Ascending aorta (tissue), 2 donors: ENCODE measurements at regions of chr4 and their contacts with region 1.

Region 1: GRCh38 chr4:109815151-109816081 is at the start of gene GAR1:
- DNase-seq: peak; percentile 57 to 93
- H3K4me3 ChIP-seq: peak within 1 kb of the TSS; percentile 68 to 80
- H3K27ac ChIP-seq: peak within 1 kb of the TSS; percentile 66 to 87
- H3K4me1 ChIP-seq: peaks cover 6% of the 10 kb centered on the region in 2 donors
- H3K27me3 ChIP-seq: no peaks in the 10 kb centered on the region
- CTCF ChIP-seq: no peak
- total RNA-seq, gene GAR1: not detected

Region 2: GRCh38 chr4:108620101-108620932 is 1195.1 kb before region 1 on chr4 and contains the start of gene RPL34:
- intact Hi-C with region 1: loop called (anchors 5 kb)
- DNase-seq: peak; percentile 89 to 99
- H3K4me3 ChIP-seq: peak within 1 kb of the TSS; percentile 66 to 83
- H3K27ac ChIP-seq: peak within 1 kb of the TSS; percentile 82 to 85
- H3K4me1 ChIP-seq: peaks cover 3 to 11% of the 10 kb centered on the region in 2 donors
- H3K27me3 ChIP-seq: no peaks in the 10 kb centered on the region
- CTCF ChIP-seq: no peak
- total RNA-seq, gene RPL34: 571 TPM

Region 3: GRCh38 chr4:109433205-109434006 is 382.0 kb before region 1 on chr4 and contains the start of gene SEC24B:
- intact Hi-C with region 1: loop called (anchors 2 kb)
- DNase-seq: peak; percentile 64 to 93
- H3K4me3 ChIP-seq: peak within 1 kb of the TSS; percentile 86 to 95
- H3K27ac ChIP-seq: peak within 1 kb of the TSS; percentile 92 to 96
- H3K4me1 ChIP-seq: peaks cover 3 to 37% of the 10 kb centered on the region in 2 donors
- H3K27me3 ChIP-seq: no peaks in the 10 kb centered on the region
- CTCF ChIP-seq: peak; percentile 34 to 90 (median 58)
- total RNA-seq, gene SEC24B: 20.1 TPM

Region 4: GRCh38 chr4:109690690-109691410 is 124.6 kb before region 1 on chr4:
- intact Hi-C with region 1: no loop called
- DNase-seq: no peak
- H3K4me3 ChIP-seq: no peak overlapping the region
- H3K27ac ChIP-seq: no peak overlapping the region
- H3K4me1 ChIP-seq: no peaks in the 10 kb centered on the region
- H3K27me3 ChIP-seq: no peaks in the 10 kb centered on the region
- CTCF ChIP-seq: no peak

Region 5: GRCh38 chr4:109702950-109703663 is 112.3 kb before region 1 on chr4 and contains the start of gene CASP6:
- intact Hi-C with region 1: loop called (anchors 2 kb)
- DNase-seq: peak; percentile 52 to 92
- H3K4me3 ChIP-seq: peak within 1 kb of the TSS; percentile 58 to 77
- H3K27ac ChIP-seq: peak within 1 kb of the TSS; percentile 73 to 82
- H3K4me1 ChIP-seq: peaks cover 6 to 15% of the 10 kb centered on the region in 2 donors
- H3K27me3 ChIP-seq: no peaks in the 10 kb centered on the region
- CTCF ChIP-seq: peak; percentile 65 to 74 (median 69)
- total RNA-seq, gene CASP6: not detected

Region 6: DNA sequence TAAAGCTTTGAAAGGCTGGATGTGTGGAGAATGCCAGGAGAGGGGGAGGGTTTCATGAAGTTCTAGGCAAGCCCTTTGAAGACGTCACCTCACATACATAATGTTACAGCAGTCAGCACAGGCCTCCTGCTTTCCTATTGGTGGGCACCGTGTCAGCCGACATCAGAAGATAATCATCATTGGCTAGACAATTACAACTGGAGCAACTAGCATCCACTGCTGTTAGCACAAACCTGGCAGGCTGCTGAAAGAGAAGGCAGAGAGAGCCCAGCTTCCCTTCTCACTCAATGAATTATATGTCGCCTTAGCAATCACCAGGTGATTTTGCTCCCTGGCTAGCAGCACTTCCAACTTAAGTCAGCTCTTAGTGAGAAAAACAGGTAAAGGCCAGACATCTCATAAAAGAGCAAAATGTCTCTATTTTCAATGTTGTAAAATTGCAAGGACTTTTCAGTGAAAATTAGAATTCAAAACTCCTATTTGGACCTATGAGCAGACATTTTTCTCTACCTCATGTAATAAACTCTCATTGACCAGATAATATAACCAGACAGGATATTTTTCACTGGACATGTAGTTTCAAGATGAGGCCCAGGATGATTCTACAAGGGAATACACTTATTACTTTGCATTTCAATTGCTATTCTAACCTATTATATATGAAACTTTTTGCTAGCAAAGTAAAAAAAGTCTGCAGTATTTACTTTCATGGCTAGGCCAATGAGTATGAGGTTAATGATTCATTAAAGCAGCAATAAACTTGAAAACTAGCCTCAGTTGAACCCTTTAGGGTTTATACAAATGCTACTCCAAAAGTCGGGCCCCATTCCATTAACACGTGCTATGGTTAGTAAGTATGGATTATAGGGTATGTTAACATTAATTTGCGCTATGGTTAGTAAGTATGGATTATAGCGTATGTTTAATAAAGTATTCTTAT is 378.7 kb after region 1 on chr4:
- intact Hi-C with region 1: loop called (anchors 5 kb)
- DNase-seq: peak; percentile 43 to 77
- H3K4me3 ChIP-seq: no peak overlapping the region
- H3K27ac ChIP-seq: no peak overlapping the region
- H3K4me1 ChIP-seq: no peaks in the 10 kb centered on the region
- H3K27me3 ChIP-seq: no peaks in the 10 kb centered on the region
- CTCF ChIP-seq: no peak